Ovary (tissue), 10 donors: ENCODE measurements at regions of chr12 and their contacts with region 1.

Region 1: DNA sequence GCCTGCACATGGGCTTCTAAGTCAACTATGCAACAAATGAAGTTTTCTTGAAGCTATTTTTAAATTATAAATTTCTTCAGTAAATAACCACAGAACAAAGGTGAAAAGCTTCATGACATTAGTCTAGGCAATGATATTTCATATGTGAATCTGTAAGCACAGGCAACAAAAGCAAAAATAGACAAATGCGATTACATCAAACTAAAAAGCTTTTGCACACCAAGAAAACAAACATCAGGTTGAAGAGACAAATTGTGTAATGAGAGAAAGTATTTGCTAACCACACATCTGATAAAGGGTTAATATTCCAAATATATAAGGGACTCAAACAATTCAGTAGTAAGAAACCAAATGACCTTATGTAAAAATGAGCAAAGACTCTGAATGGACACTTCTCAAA is 360.1 kb downstream of the SLC16A7 start:
- DNase-seq: no peak
- H3K4me3 ChIP-seq: no peak overlapping the region
- H3K27ac ChIP-seq: no peak overlapping the region
- H3K4me1 ChIP-seq: no peaks in the 10 kb centered on the region
- H3K27me3 ChIP-seq: no peaks in the 10 kb centered on the region
- CTCF ChIP-seq: no peak
- EP300 ChIP-seq: no peak
- POLR2A ChIP-seq: no peak

Region 2: DNA sequence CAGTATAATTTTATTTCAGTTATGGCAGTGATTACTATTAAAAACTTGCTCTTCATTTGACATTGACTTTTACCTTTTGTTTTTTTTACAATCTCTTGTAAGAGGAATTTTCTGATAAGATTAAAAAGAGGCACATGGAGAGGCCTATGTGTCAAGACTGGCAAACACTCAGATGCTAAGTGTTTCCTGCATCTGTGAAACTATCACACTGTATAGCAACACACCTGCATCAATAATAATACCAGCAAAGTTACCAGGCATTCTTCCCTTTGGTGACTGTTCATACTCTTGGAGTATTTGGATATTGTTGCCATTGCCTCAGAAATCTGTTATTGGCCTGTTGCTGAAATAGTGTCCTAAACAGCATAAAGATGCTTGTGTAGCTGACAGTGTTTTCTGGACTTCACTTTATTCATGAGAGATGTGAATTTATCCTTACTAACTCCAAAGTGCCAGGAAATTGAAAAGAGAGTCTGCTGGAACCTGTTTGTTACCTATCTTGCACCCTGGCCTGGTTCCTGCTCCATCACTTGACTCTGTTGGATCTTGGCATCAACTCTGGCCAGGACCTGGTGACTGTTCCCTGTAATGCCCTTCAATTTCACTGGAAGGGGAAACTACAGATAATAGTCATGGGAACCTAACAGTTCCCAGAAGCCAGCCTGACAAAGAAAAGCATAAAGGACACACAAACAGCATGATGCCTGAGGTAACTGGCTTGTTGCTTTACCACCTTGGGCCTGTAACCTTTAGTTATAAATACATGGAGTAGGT is 340.4 kb before region 1 on chr12:
- intact Hi-C with region 1: no loop called
- DNase-seq: no peak
- H3K4me3 ChIP-seq: no peak overlapping the region
- H3K27ac ChIP-seq: no peak overlapping the region
- H3K4me1 ChIP-seq: no peaks in the 10 kb centered on the region
- H3K27me3 ChIP-seq: no peaks in the 10 kb centered on the region
- CTCF ChIP-seq: no peak
- EP300 ChIP-seq: no peak
- POLR2A ChIP-seq: no peak

Region 3: DNA sequence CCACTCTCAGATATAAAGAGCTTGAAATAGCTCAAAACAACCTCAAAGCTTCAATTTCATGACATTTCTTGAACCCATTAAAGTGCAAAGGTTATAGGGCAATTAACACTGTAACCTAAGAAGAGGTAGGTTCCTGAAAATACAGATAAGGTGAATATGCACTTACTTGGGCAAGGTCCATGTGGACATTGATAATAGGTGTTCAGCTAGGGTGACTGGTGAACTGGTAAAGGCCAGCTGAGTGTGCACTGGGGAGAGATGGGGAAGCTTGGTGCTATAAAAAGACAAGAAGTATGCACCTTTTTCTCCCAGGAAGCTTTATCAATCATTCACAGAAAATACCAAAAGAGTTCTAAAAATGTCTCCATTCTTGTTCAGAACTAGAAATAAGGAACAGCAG is 58.5 kb after region 1 on chr12:
- intact Hi-C with region 1: loop called in 1 of 4 experiments (anchors 5 kb)
- DNase-seq: no peak
- H3K4me3 ChIP-seq: no peak overlapping the region
- H3K27ac ChIP-seq: no peak overlapping the region
- H3K4me1 ChIP-seq: no peaks in the 10 kb centered on the region
- H3K27me3 ChIP-seq: no peaks in the 10 kb centered on the region
- CTCF ChIP-seq: no peak
- EP300 ChIP-seq: no peak
- POLR2A ChIP-seq: no peak